Activated CD8-positive, alpha-beta T cell treated with anti-CD3 and anti-CD28 coated beads for 36 hours (primary cell): ENCODE measurements at regions of chr10 and their contacts with region 1.

Region 1: DNA sequence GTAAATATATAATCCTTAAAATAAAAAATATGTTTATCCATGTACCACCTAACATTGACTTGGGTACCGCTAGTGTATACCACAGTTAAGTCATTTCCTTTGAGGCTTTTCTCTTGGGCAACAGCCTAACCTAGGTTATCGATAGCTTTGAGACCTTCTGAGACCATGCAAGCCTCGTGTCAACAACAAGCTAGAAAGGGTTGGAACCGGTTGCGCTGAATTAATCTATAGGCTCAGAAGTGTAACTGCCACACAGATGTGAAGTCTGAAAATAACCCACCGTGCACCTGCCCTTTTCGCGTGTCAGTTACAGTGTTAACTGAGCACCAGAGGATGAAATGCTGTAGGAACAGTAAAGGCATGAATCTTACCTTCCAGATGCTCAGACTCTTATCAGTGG is 59.8 kb downstream of the ARID5B start:
- DNase-seq: peak; percentile 43
- ATAC-seq: peak; percentile 73
- H3K4me3 Mint-ChIP-seq: peak overlapping the region; percentile 42
- H3K27ac Mint-ChIP-seq: peak overlapping the region; percentile 85
- H3K4me1 Mint-ChIP-seq: peaks cover 79% of the 10 kb centered on the region
- H3K27me3 Mint-ChIP-seq: no peaks in the 10 kb centered on the region
- CTCF ChIP-seq: no peak

Region 2: GRCh38 chr10:61612009-61612408 is 349.3 kb before region 1 on chr10:
- CTCF ChIA-PET with region 1: no interaction called
- POLR2A ChIA-PET with region 1: no interaction called
- intact Hi-C with region 1: no loop called
- DNase-seq: no peak
- ATAC-seq: no peak
- H3K4me3 Mint-ChIP-seq: no peak overlapping the region
- H3K27ac Mint-ChIP-seq: no peak overlapping the region
- H3K4me1 Mint-ChIP-seq: no peaks in the 10 kb centered on the region
- H3K27me3 Mint-ChIP-seq: peaks cover 2% of the 10 kb centered on the region
- CTCF ChIP-seq: no peak

Region 3: DNA sequence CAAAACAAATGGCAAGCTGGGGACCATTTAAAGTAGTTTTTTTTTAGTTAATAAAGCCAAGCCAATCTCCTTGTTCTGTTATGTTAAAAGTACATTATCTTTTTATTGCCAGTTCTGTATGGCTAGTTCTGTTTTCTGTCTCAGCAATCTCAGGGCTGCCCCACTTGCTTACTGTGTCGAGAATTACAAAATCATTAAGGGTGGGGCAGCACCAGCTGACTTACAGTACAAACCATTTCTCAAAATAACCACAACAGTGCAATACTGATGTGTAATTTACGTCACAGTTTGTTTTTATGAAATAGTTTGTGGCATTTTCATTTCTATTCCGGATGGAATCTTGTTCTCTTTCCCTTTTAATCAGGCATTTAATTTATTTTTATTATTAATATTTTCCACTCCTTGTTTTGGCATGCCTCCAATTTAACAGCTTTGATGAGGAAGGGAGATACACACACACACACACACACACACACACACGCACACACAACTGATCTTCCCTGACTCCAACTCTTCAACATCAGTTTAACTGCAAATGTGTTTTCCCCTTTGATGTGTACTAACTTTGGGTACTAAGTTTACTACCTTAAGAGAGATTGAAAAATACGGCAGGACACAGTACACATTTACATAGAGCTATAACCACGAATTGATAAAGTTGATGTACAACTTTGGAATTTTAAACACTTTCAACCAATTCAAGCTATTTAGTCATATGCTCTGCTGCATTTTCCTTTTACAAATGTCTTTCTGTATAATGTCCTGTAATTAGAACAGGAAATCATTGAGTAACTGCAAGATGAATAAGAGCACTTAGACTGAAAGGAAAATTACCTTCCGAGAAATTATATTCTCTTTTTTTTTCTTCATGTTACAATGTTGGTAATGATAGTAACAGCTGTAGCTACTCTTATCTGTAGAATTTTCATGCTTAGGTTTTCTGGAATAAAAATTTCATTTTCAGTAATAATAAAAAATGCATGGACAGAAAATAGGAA is 31.7 kb after region 1 on chr10:
- CTCF ChIA-PET with region 1: no interaction called
- POLR2A ChIA-PET with region 1: interaction called, 22 read pairs
- intact Hi-C with region 1: no loop called
- DNase-seq: peak; percentile 72
- ATAC-seq: peak; percentile 41
- H3K4me3 Mint-ChIP-seq: peak overlapping the region; percentile 68
- H3K27ac Mint-ChIP-seq: peak overlapping the region; percentile 95
- H3K4me1 Mint-ChIP-seq: peaks cover 66% of the 10 kb centered on the region
- H3K27me3 Mint-ChIP-seq: no peaks in the 10 kb centered on the region
- CTCF ChIP-seq: no peak

Region 4: DNA sequence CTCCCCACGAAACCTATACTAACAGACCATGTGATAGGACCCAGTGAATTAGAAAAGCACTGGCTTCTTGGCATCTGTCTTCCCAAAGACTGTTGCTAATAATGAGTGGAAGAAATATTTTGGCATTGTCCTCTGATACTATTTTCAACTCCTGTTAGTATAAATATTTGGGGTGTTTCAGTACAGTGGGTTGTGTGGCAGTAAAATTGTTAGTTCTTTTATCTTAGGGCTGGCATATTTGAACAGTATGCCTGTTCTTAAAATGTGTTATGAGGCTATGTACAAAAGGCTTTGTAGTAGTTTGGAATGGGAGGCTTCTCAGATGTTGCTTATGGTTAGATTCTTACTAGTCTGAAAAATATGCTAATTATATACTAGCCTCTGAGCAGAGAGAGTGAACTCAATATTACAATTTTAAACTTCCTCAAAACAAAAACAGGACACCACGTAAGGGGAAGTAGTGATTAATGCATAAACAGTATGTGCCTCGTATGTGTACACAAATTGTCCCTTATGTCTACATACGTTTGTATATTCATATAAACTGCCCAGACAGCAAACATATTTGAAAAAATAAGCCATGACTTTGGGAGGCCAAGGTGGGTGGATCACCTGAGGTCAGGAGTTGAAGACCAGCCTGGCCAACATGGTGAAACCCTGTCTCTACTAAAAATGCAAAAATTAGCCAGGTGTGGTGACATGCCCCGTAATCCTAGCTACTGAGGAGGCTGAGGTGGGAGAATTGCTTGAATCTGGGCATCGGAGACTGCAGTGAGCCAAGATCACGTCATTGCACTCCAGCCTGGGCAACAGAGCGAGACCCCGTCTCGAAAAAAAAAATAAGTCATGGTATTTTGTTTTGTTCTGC is 55.6 kb after region 1 on chr10:
- CTCF ChIA-PET with region 1: no interaction called
- POLR2A ChIA-PET with region 1: no interaction called
- intact Hi-C with region 1: no loop called
- DNase-seq: no peak
- ATAC-seq: no peak
- H3K4me3 Mint-ChIP-seq: no peak overlapping the region
- H3K27ac Mint-ChIP-seq: peak overlapping the region; percentile 36
- H3K4me1 Mint-ChIP-seq: peaks cover 45% of the 10 kb centered on the region
- H3K27me3 Mint-ChIP-seq: no peaks in the 10 kb centered on the region
- CTCF ChIP-seq: no peak